A673 (cell line): ENCODE measurements at regions of chr12 and their contacts with region 1.

Region 1: GRCh38 chr12:102769319-102769916 is 147.6 kb downstream of the PAH start:
- DNase-seq: peak; percentile 87
- H3K4me3 ChIP-seq: no peak overlapping the region
- H3K27ac ChIP-seq: no peak overlapping the region
- H3K4me1 ChIP-seq: peaks cover 27% of the 10 kb centered on the region
- H3K27me3 ChIP-seq: no peaks in the 10 kb centered on the region
- CTCF ChIP-seq: peak; percentile 81

Region 2: DNA sequence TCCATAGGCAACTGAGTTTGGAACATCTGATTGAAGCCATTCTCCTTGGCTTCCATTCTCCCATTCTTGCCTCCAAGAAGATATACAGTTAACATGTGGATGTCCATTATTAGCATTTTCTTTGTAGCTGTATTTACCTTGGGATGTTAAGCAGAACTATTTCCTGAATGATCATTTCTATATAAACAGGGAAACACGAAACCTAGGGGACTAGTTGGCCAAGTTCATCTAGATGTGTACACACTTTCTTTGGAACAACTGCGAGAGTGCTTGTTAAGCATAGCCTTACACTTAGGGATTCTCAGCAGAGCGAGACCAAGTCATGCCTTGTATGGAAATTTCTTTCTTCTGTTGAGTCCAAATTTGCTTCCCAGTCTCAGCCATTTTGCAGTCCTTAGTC is 850.0 kb before region 1 on chr12:
- CTCF ChIA-PET with region 1: no interaction called
- POLR2A ChIA-PET with region 1: no interaction called
- intact Hi-C with region 1: loop called (anchors 5 kb)
- DNase-seq: no peak
- H3K4me3 ChIP-seq: no peak overlapping the region
- H3K27ac ChIP-seq: no peak overlapping the region
- H3K4me1 ChIP-seq: no peaks in the 10 kb centered on the region
- H3K27me3 ChIP-seq: no peaks in the 10 kb centered on the region
- CTCF ChIP-seq: no peak

Region 3: DNA sequence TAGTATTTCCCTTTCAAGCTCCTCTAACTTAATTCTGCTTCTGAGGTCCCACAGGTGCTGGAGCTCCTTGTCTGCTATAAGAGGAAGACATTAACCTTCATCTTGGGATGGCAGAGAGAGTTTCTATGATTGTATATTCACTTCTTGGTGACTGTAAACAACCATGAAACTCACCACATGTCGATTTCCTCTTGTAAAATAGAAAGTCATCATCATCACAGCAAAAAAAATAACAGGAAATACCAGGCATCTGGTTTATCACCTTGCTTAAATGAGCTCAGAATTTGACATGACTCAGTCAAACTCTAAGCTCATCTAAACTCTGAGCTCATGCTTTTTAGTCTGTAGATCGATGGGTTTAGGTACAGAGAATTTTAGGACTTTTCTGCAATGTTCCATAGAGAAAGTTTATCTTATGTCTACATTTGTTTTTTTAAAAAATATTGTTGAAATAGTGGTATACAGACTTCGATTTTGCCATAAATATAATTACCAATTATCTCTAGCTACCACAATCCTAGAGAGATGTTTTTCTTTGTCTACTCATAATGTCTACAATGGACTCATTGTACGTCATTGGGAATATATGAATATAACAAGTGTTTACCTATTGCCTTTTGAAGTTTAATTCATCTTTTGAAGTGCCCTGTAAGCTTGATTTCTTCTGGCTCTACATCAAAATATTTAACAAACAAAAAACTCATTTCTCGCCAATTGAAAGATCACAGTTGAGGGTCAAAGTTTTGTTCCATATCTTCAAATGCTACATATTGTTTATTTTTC is 347.4 kb before region 1 on chr12:
- CTCF ChIA-PET with region 1: no interaction called
- POLR2A ChIA-PET with region 1: no interaction called
- intact Hi-C with region 1: loop called (anchors 5 kb)
- DNase-seq: peak; percentile 52
- H3K4me3 ChIP-seq: no peak overlapping the region
- H3K27ac ChIP-seq: no peak overlapping the region
- H3K4me1 ChIP-seq: peaks cover 20% of the 10 kb centered on the region
- H3K27me3 ChIP-seq: no peaks in the 10 kb centered on the region
- CTCF ChIP-seq: no peak

Region 4: DNA sequence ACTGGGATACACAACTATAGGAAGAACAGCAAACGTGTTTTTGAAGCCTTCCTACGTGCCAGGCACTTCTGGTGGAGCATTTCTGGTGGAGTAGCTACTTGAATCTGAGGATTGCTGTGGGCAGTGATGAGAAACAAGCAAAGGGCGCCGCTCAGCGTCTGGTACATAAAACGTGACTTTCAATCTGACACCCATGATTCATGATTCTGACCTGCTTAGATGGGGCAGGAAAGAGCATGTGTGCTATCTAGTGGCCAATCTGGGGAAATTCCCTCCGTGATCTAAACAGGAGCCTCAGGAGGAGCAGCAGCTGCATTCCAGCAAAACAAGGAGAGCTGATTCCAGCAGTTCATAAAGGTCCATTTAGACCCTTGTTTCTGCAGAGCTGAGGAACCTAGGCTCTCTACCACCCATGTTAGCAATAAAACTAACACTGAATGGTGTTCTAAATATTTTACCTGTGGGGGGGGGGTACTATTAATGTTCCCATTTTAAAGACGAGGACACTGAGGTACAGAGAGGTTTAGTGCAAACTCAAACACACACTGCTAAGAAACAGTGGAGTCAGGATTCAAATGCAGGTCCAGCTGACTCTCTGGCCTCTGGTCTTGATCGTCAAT is 109.8 kb after region 1 on chr12:
- CTCF ChIA-PET with region 1: no interaction called
- POLR2A ChIA-PET with region 1: no interaction called
- intact Hi-C with region 1: no loop called
- DNase-seq: peak; percentile 77
- H3K4me3 ChIP-seq: no peak overlapping the region
- H3K27ac ChIP-seq: no peak overlapping the region
- H3K4me1 ChIP-seq: no peaks in the 10 kb centered on the region
- H3K27me3 ChIP-seq: peaks cover 8% of the 10 kb centered on the region
- CTCF ChIP-seq: peak; percentile 61

Region 5: DNA sequence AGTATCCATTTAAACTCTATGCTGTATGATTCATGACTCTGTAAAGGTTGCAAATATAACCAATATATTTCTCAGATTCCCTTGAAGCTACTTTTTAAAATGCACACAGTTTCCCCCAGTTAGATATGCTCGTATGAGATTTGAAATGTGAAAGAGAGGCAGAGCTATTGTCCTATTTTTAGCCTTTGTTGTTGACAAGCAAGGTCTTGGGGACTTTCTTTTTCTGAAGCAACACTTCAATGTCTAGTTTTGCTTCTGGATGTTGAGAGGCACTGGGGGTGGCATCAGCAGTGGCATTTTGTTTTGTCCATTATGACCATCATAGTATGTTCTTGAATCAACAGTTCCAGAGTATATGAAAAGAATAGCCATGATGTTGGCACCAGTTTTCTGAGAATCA is 251.4 kb after region 1 on chr12:
- CTCF ChIA-PET with region 1: no interaction called
- POLR2A ChIA-PET with region 1: no interaction called
- intact Hi-C with region 1: no loop called
- DNase-seq: no peak
- H3K4me3 ChIP-seq: no peak overlapping the region
- H3K27ac ChIP-seq: no peak overlapping the region
- H3K4me1 ChIP-seq: no peaks in the 10 kb centered on the region
- H3K27me3 ChIP-seq: no peaks in the 10 kb centered on the region
- CTCF ChIP-seq: no peak